Sigmoid colon (tissue), 7 donors: ENCODE measurements at regions of chr7 and their contacts with region 1.

Region 1: GRCh38 chr7:20330240-20330927 is at the start of gene ITGB8:
- DNase-seq: peak; percentile 93
- H3K4me3 ChIP-seq: peak within 1 kb of the TSS; percentile 56 to 81 (median 77)
- H3K27ac ChIP-seq: peak within 1 kb of the TSS; percentile 86 to 95 (median 90)
- H3K4me1 ChIP-seq: peaks cover 0 to 19% (median 12%) of the 10 kb centered on the region in 4 donors
- H3K27me3 ChIP-seq: no peaks in the 10 kb centered on the region
- CTCF ChIP-seq: no peak
- EP300 ChIP-seq: peak in 1 of 4 donors; percentile 19
- POLR2A ChIP-seq: peak; percentile 14 to 35
- total RNA-seq, gene ITGB8: 9.0 to 22.4 (median 20.2) TPM

Region 2: DNA sequence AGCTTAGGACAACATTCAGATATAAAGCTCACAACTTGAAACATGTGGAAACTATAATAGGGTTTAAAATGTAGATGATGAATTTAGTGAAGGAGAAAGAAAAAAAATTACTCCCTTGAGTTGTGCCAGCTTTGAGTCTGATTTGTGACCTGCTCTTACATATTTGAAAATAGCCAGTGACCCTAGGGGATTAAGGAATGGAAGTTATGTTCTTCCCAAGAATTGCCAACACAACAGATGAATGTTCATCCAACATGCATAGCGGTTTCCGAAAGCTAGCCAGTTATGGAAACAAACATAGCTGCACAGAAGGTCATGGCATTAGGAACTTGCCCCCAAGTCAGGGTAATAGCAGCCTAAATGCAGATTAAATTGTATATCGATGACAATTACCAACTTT is 567.8 kb before region 1 on chr7:
- intact Hi-C with region 1: no loop called
- DNase-seq: no peak
- H3K4me3 ChIP-seq: no peak overlapping the region
- H3K27ac ChIP-seq: no peak overlapping the region
- H3K4me1 ChIP-seq: no peaks in the 10 kb centered on the region
- H3K27me3 ChIP-seq: no peaks in the 10 kb centered on the region
- CTCF ChIP-seq: no peak
- EP300 ChIP-seq: no peak
- POLR2A ChIP-seq: no peak

Region 3: DNA sequence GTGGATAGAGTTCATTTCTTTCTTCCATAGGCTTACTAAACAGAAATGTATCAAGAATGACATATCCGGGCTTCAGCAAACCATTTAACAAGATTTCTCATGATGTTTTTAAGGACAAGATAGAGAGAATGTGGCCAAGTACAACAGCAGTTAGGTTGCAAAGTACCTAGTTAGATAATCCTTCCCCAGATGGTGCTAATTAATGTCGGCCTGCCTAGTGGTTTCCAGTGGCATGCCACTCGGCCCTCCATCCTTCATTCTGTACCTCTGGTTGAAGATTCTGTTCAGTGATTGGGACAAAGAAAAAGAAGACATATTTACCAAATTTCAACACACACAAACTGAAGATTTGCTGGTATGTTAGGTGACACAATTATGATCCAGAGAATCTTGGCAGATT is 325.3 kb before region 1 on chr7:
- intact Hi-C with region 1: no loop called
- DNase-seq: no peak
- H3K4me3 ChIP-seq: no peak overlapping the region
- H3K27ac ChIP-seq: no peak overlapping the region
- H3K4me1 ChIP-seq: no peaks in the 10 kb centered on the region
- H3K27me3 ChIP-seq: no peaks in the 10 kb centered on the region
- CTCF ChIP-seq: no peak
- EP300 ChIP-seq: no peak
- POLR2A ChIP-seq: no peak

Region 4: GRCh38 chr7:20310963-20311742 is 19.2 kb before region 1 on chr7:
- intact Hi-C with region 1: no loop called
- DNase-seq: no peak
- H3K4me3 ChIP-seq: no peak overlapping the region
- H3K27ac ChIP-seq: no peak overlapping the region
- H3K4me1 ChIP-seq: no peaks in the 10 kb centered on the region
- H3K27me3 ChIP-seq: no peaks in the 10 kb centered on the region
- CTCF ChIP-seq: peak in 2 of 4 experiments; percentile 15 to 24
- EP300 ChIP-seq: no peak
- POLR2A ChIP-seq: no peak

Region 5: GRCh38 chr7:20407585-20408461 is 77.4 kb after region 1 on chr7:
- intact Hi-C with region 1: loop called (anchors 5 kb)
- DNase-seq: peak; percentile 63
- H3K4me3 ChIP-seq: no peak overlapping the region
- H3K27ac ChIP-seq: peak overlapping the region in 2 of 4 donors; percentile 15 to 56
- H3K4me1 ChIP-seq: peaks cover 0 to 26% (median 12%) of the 10 kb centered on the region in 4 donors
- H3K27me3 ChIP-seq: no peaks in the 10 kb centered on the region
- CTCF ChIP-seq: no peak
- EP300 ChIP-seq: no peak
- POLR2A ChIP-seq: no peak